B cell (primary cell): ENCODE measurements at regions of chr22 and their contacts with region 1.

Region 1: GRCh38 chr22:43136255-43136654 is 6.9 kb downstream of the MCAT start:
- DNase-seq: peak; percentile 71
- ATAC-seq: peak; percentile 92
- H3K4me3 ChIP-seq: no peak overlapping the region
- H3K4me3 Mint-ChIP-seq: no peak overlapping the region
- H3K27ac ChIP-seq: no peak overlapping the region
- H3K27ac Mint-ChIP-seq: no peak overlapping the region
- H3K4me1 ChIP-seq: peaks cover 0 to 10% of the 10 kb centered on the region in 2 donors
- H3K4me1 Mint-ChIP-seq: peaks cover 8% of the 10 kb centered on the region
- H3K27me3 ChIP-seq: no peaks in the 10 kb centered on the region
- H3K27me3 Mint-ChIP-seq: no peaks in the 10 kb centered on the region
- CTCF ChIP-seq: peak; percentile 75

Region 2: DNA sequence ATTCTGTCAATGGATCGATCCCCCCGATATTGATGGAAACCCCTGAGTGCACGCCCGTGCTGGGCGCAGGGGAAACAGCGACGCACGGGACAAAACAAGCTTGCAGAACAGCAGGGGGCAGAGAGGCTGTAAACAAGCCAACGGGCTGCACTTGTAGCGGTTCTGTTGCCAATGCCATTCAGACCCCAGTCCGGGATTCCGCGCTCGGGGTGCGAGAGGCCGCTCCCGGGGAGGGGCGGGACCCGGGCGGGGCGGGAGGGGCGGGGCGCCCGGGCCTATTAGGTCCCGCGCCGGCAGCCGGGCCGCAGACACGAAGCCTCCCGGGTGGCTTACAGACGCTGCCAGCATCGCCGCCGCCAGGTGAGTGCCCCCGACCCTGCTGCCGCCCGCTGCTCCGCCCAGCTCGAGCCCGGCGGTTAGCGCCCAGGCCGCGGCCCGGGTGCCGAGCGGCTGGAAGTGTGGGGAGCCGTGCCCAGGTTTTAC is 25.8 kb before region 1 on chr22 and contains the start of gene BIK:
- CTCF ChIA-PET with region 1: interaction called, 9 read pairs
- POLR2A ChIA-PET with region 1: interaction called, 5 read pairs
- intact Hi-C with region 1: loop called (anchors 2 kb)
- DNase-seq: peak; percentile 65
- ATAC-seq: peak; percentile 61
- H3K4me3 ChIP-seq: peak within 1 kb of the TSS; percentile 45 to 73 (median 57)
- H3K4me3 Mint-ChIP-seq: peak within 1 kb of the TSS; percentile 87
- H3K27ac ChIP-seq: no peak within 1 kb of the TSS
- H3K27ac Mint-ChIP-seq: peak within 1 kb of the TSS; percentile 41
- H3K4me1 ChIP-seq: peaks cover 32 to 41% of the 10 kb centered on the region in 2 donors
- H3K4me1 Mint-ChIP-seq: peaks cover 25% of the 10 kb centered on the region
- H3K27me3 ChIP-seq: peaks cover 0 to 71% (median 34%) of the 10 kb centered on the region in 4 experiments
- H3K27me3 Mint-ChIP-seq: peaks cover 36% of the 10 kb centered on the region
- CTCF ChIP-seq: peak; percentile 26
- total RNA-seq, gene BIK: 1.3 TPM in 2 replicates